ENCODE measurements at regions of chr22 and their contacts with region 1.

Region 1: GRCh38 chr22:25488244-25489020 is 76.0 kb upstream of the GRK3 start:
- DNase-seq: no peak
- H3K4me3 Mint-ChIP-seq: peak overlapping the region; percentile 59
- H3K27ac Mint-ChIP-seq: peak overlapping the region; percentile 94
- H3K4me1 Mint-ChIP-seq: peaks cover 54% of the 10 kb centered on the region
- H3K27me3 Mint-ChIP-seq: no peaks in the 10 kb centered on the region

Region 2: DNA sequence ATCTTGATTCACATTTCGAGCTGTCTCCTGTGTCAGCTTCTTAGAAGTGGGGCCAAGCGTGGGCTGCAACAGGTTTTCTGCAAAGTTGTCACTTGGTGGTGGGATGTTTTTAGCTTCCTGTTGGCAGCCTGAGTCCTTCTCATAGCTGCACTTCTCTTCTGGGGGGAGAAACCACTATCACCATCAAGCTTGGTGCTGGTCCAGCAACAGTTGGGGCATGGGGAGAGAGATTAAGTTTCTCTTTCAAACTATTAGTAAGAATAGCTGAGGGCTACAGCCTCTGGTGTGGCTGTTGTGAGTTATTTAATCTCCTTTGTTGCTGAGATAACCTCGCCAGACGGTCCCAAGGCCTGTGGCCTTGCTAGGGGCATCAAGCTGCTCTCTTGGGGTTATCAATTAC is 412.1 kb before region 1 on chr22:
- intact Hi-C with region 1: loop called (anchors 5 kb)
- DNase-seq: no peak
- H3K4me3 Mint-ChIP-seq: peak overlapping the region; percentile 46
- H3K27ac Mint-ChIP-seq: peak overlapping the region; percentile 81
- H3K4me1 Mint-ChIP-seq: peaks cover 72% of the 10 kb centered on the region
- H3K27me3 Mint-ChIP-seq: no peaks in the 10 kb centered on the region

Region 3: GRCh38 chr22:25564320-25564978 is 76.0 kb after region 1 on chr22 and contains the start of gene GRK3:
- intact Hi-C with region 1: loop called (anchors 1 kb)
- DNase-seq: peak; percentile 69
- H3K4me3 Mint-ChIP-seq: peak within 1 kb of the TSS; percentile 99
- H3K27ac Mint-ChIP-seq: peak within 1 kb of the TSS; percentile 97
- H3K4me1 Mint-ChIP-seq: peaks cover 60% of the 10 kb centered on the region
- H3K27me3 Mint-ChIP-seq: no peaks in the 10 kb centered on the region
- total RNA-seq, gene GRK3: 60.2 and 61.4 TPM in 2 replicates

Region 4: GRCh38 chr22:25623310-25623734 is 134.9 kb after region 1 on chr22:
- intact Hi-C with region 1: loop called (anchors 10 kb)
- DNase-seq: no peak
- H3K4me3 Mint-ChIP-seq: no peak overlapping the region
- H3K27ac Mint-ChIP-seq: peak overlapping the region; percentile 45
- H3K4me1 Mint-ChIP-seq: peaks cover 59% of the 10 kb centered on the region
- H3K27me3 Mint-ChIP-seq: no peaks in the 10 kb centered on the region

Region 5: GRCh38 chr22:25669253-25670069 is 181.0 kb after region 1 on chr22:
- intact Hi-C with region 1: loop called (anchors 1 kb)
- DNase-seq: no peak
- H3K4me3 Mint-ChIP-seq: no peak overlapping the region
- H3K27ac Mint-ChIP-seq: peak overlapping the region; percentile 33
- H3K4me1 Mint-ChIP-seq: peaks cover 26% of the 10 kb centered on the region
- H3K27me3 Mint-ChIP-seq: no peaks in the 10 kb centered on the region

Region 6: GRCh38 chr22:25736378-25737011 is 248.1 kb after region 1 on chr22:
- intact Hi-C with region 1: loop called (anchors 1 kb)
- DNase-seq: peak; percentile 74
- H3K4me3 Mint-ChIP-seq: peak overlapping the region; percentile 54
- H3K27ac Mint-ChIP-seq: peak overlapping the region; percentile 99
- H3K4me1 Mint-ChIP-seq: peaks cover 56% of the 10 kb centered on the region
- H3K27me3 Mint-ChIP-seq: no peaks in the 10 kb centered on the region

Region 7: DNA sequence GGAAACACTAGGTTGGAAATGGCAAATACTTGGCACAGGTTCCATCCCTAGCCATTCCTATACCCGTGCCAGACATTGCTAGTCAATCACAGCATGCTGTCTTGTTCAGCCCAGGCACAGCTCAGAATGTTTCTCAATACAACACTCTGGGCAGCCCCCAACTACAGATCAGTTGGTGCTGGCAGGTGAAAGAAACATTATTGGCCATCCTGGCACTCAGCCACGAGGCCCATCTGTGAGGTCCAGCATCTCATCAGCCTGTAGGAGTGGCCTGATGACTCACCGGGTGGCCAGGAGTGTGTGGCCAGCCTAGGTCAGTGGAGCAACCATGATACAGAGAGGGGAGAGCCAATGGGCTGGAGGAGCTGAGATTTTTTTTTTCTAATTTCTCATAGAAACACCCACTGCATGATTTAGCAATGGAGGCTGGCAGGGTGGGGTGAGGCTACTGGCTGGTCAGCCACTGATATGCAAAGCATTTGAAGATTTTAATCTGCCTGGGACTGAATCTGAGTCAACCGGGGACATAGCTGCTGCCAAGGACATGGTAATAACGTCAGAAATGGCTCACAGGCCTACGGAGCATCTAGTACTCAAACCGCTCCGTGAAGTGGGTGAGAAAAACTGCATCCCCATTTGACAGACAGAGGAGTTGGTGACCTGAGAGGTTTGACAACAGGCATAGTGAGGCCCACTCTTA is 259.0 kb after region 1 on chr22:
- intact Hi-C with region 1: loop called (anchors 1 kb)
- DNase-seq: no peak
- H3K4me3 Mint-ChIP-seq: no peak overlapping the region
- H3K27ac Mint-ChIP-seq: peak overlapping the region; percentile 100
- H3K4me1 Mint-ChIP-seq: peaks cover 82% of the 10 kb centered on the region
- H3K27me3 Mint-ChIP-seq: no peaks in the 10 kb centered on the region

Measured in activated T-helper 2 cell treated with anti-CD3 and anti-CD28 coated beads, Interferon-gamma antibody, Interleukin-2, Interleukin-4, amounts not matched to agents 10 μg/mL and 5 μg/mL and 100 μg/mL, durations not matched to agents 14 hours and 24 hours and 36 hours (primary cell).